ENCODE measurements at regions of chrX and their contacts with region 1.

Region 1: GRCh38 chrX:72126539-72127140 is 5.1 kb downstream of the RTL5 start:
- DNase-seq: peak; percentile 75
- CTCF ChIP-seq: peak; percentile 69

Region 2: GRCh38 chrX:71953946-71954345 is 172.7 kb before region 1 on chrX:
- CTCF ChIA-PET with region 1: no interaction called
- POLR2A ChIA-PET with region 1: no interaction called
- DNase-seq: no peak
- CTCF ChIP-seq: no peak

Region 3: GRCh38 chrX:71998836-71999509 is 127.7 kb before region 1 on chrX:
- CTCF ChIA-PET with region 1: interaction called, 45 read pairs
- POLR2A ChIA-PET with region 1: no interaction called
- DNase-seq: peak; percentile 40
- CTCF ChIP-seq: peak; percentile 47

Region 4: DNA sequence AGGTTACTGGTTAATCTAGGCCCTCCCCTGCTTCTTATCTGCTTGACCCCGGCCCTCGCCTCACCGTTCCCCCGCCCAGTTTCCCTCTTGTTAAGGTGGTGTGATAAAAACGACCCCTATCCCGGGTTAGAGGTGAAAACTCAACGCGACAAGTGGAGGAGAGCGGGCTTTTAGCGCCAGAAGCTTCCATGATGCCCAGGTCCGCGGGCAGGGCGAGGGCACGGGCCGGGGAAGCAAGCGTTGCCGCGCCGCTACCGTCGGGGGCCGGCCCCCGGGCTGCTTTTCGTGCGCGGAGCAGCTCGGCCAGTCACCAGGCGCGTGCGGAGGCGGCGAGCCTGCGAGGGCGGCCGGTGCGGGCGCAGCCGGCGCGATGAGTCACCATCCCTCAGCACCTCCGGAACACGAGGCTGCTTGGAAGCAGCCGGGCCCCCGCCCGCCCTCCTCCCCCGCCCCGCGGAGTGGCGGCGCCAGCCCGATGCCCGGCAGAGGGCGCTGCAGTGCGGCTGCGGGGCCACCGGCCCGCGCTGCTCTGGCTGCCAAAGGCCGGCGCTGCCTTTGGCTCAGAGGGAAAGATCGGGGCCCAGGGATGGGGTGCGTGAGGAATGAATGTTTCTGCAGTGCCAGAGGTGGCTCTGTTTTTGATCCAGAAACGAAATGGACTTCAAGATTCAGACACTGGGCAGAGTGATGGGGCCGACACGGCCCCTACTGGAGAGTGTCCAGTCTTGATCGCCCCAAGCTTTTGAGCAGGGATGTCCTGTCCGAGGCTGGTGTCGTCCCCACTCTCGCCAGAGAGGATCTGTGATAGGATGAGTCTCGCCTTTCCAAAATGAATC is 108.1 kb before region 1 on chrX:
- CTCF ChIA-PET with region 1: interaction called, 72 read pairs
- POLR2A ChIA-PET with region 1: no interaction called
- DNase-seq: peak; percentile 78
- CTCF ChIP-seq: peak; percentile 57

Region 5: DNA sequence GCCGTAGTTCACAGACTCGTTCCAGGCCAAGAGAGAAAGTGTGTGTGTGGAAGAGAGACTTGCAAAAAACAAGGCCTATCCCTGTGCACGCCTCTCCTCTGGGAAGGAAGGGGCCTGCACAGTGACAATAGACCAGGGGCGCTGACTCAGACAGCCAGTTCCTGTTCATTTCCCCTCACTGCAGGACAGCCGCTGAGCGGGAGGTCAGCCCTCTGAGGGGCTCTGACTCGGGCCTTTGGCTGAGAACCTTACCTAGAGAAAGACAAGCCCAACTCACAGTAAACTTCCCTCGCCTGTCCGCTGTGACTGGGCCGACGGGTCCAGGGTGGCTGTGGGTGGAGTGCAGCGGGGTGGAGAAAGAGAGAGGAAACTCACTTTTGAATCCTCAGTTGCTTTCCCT is 47.0 kb before region 1 on chrX:
- CTCF ChIA-PET with region 1: no interaction called
- POLR2A ChIA-PET with region 1: no interaction called
- DNase-seq: no peak
- CTCF ChIP-seq: no peak

Region 6: DNA sequence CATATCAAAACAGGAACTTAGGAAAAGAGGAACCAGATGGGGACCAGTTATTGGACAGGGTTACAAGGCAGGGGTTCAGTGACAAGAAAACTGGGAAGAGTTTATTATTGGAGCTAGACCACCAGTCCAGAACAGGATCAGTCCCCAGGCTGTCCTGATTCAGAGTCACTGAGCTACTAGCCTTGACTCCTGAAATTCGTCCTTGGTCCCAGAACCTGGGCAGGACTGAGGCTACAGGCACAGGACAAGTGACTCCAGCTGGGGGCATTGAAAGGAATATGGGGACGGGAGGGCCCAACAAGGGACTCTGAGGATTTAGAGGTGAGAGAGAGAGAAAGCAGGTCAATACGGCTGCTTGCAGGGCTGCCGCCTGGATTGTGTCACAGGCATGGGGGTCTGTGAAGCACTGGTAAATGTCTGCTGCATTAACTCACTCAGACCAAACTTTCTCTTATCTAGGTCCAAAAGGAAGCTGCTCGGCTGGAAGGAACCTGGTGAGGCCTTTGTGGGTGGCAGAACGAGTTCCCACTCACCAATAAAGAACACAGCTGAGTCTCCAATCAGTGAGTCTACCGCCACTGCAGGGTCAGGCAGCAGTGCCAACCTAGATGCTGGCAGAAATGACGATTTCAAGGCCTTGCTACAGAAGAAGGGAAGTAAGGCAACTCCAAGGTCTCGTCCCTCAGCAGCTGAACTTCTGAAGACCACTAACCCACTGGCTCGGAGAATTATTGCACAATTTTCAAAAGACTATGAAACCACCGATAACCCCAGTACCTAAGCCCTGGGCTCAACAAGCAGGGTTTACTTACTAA is 16.4 kb after region 1 on chrX:
- CTCF ChIA-PET with region 1: interaction called, 14 read pairs
- POLR2A ChIA-PET with region 1: no interaction called
- DNase-seq: no peak
- CTCF ChIP-seq: no peak

Measured in GM10248 (cell line).